Mammary epithelial cell (primary cell): ENCODE measurements at regions of chr18 and their contacts with region 1.

Region 1: GRCh38 chr18:31977270-31977872 is 34.4 kb upstream of the TRAPPC8 start:
- DNase-seq: peak; percentile 32
- H3K4me3 ChIP-seq: no peak overlapping the region
- H3K27ac ChIP-seq: no peak overlapping the region
- H3K4me1 ChIP-seq: no peaks in the 10 kb centered on the region
- H3K27me3 ChIP-seq: no peaks in the 10 kb centered on the region
- CTCF ChIP-seq: peak; percentile 56 to 66

Region 2: DNA sequence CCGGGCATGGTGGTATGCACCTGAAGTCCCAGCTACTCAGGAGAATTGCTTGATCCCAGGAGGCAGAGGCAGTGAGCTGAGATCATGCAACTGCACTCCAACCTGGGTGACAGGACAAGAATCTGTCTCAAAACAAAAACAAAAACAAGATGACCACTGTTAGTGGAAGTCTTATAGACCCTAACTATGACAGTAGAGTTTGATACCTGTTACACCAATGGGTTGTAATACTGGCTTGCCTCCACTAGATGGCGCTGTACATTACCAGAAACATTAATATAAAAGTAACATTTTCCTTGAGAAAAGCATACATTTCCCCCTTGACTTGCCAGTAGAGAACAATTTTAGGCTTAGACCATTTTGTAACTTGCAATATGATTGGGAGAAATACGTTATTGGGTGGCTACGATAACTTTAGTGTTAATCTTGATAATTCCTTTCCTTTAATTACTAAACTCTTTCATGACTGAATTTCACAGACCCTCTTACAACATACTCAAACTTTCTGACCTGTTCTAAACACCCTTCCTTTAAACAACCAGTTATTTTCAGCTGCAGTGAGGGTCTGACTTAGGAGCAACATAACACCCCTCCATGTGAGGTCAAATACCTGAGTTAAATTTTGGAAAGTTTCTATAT is 236.2 kb before region 1 on chr18:
- CTCF ChIA-PET with region 1: interaction called, 3 read pairs
- dilution Hi-C with region 1: no loop called
- in situ Hi-C with region 1: loop called in 1 of 2 experiments (anchors 25 kb)
- intact Hi-C with region 1: loop called (anchors 1 kb)
- DNase-seq: peak; percentile 12
- H3K4me3 ChIP-seq: no peak overlapping the region
- H3K27ac ChIP-seq: no peak overlapping the region
- H3K4me1 ChIP-seq: no peaks in the 10 kb centered on the region
- H3K27me3 ChIP-seq: no peaks in the 10 kb centered on the region
- CTCF ChIP-seq: peak; percentile 75 to 82